ENCODE measurements at regions of chr21 and their contacts with region 1.

Region 1: DNA sequence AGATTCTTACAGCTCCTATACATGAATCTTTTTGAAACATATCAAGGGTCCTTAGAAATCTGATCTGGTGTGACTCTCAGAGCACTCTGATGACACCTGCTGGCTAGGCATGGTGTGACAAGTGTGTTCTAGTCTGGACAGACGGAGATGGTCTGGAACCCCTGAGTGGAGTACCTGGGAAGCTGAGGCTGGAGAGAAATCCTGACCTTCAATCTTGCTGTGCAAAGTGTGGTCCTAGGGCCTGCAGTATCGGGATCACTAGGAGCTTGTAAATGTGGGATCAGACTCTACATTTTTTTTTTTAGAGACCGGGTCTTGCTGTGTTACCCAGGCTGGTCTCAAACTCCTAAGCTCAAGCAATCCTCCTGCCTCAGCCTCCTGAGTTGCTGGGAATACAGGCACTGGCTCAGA is 78.6 kb upstream of the SOD1 start:
- DNase-seq: peak; percentile 77
- H3K4me3 Mint-ChIP-seq: no peak overlapping the region
- H3K27ac Mint-ChIP-seq: no peak overlapping the region
- H3K4me1 Mint-ChIP-seq: peaks cover 3% of the 10 kb centered on the region
- H3K27me3 Mint-ChIP-seq: peaks cover 17% of the 10 kb centered on the region

Region 2: DNA sequence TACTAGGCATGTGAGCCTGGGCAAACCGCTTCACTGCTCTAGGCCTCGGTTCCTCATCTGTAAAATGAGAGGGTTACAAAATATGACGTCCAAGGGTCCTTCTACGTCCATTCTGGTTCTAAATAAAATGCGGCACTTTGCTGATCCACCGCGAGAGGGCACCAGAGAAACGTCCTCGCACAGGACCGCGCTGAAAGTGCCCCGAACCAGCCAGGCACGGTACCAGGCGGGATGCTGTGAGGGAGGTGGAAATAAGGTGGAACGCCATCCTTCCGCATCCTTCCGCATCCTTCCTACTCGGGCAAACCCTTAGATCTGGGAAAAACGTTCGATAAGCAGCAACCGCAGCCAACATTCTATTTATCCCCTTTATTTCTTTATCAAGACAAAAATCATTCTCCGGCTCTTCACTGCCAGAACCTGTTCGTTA is 482.3 kb before region 1 on chr21:
- CTCF ChIA-PET with region 1: interaction called, 17 read pairs
- POLR2A ChIA-PET with region 1: no interaction called
- DNase-seq: peak; percentile 75
- H3K4me3 Mint-ChIP-seq: no peak overlapping the region
- H3K27ac Mint-ChIP-seq: no peak overlapping the region
- H3K4me1 Mint-ChIP-seq: peaks cover 26% of the 10 kb centered on the region
- H3K27me3 Mint-ChIP-seq: peaks cover 13% of the 10 kb centered on the region

Region 3: DNA sequence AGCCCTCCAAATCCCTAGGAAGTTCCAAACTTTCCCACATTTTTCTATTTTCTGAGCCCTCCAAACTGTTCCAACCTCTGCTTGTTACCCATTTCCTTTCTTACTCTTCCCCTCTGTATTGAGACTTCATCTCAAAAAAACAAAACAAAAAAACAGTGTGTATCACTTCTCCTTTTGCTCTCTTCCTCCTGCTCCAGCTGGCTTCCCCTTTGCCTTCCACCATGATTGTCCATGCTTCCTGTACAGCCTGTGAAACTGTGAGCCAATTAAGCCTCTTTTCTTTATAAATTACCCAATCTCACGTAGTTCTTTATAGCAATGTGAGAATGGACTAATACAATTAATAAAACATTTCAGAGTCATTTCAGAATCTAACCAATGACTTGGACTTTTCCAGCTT is 473.0 kb before region 1 on chr21:
- CTCF ChIA-PET with region 1: interaction called, 12 read pairs
- POLR2A ChIA-PET with region 1: interaction called, 3 read pairs
- DNase-seq: no peak
- H3K4me3 Mint-ChIP-seq: no peak overlapping the region
- H3K27ac Mint-ChIP-seq: no peak overlapping the region
- H3K4me1 Mint-ChIP-seq: peaks cover 22% of the 10 kb centered on the region
- H3K27me3 Mint-ChIP-seq: no peaks in the 10 kb centered on the region

Region 4: GRCh38 chr21:31198575-31198974 is 382.3 kb before region 1 on chr21:
- CTCF ChIA-PET with region 1: interaction called, 100 read pairs
- POLR2A ChIA-PET with region 1: interaction called, 5 read pairs
- DNase-seq: no peak
- H3K4me3 Mint-ChIP-seq: no peak overlapping the region
- H3K27ac Mint-ChIP-seq: no peak overlapping the region
- H3K4me1 Mint-ChIP-seq: peaks cover 39% of the 10 kb centered on the region
- H3K27me3 Mint-ChIP-seq: no peaks in the 10 kb centered on the region

Region 5: DNA sequence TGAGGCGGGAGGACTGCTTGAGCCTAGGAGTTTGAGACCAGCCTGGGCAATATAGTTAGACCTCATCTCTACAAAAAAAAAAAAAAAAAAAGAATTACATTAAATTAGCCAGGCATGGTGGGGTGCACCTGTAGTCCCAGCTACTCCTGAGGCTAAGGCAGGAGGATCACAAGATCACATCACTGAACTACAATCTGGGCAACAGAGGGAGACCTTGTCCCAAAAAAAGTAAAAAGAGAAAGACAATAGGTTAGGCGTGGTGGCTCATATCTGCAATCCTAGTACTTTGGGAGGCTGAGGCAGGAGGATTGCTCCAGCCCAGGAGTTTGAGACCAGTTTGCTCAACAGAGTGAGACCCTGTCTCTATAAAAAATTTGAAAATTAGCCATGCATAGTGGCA is 367.1 kb before region 1 on chr21:
- CTCF ChIA-PET with region 1: interaction called, 21 read pairs
- POLR2A ChIA-PET with region 1: no interaction called
- DNase-seq: no peak
- H3K4me3 Mint-ChIP-seq: no peak overlapping the region
- H3K27ac Mint-ChIP-seq: no peak overlapping the region
- H3K4me1 Mint-ChIP-seq: no peaks in the 10 kb centered on the region
- H3K27me3 Mint-ChIP-seq: no peaks in the 10 kb centered on the region

Region 6: GRCh38 chr21:31371715-31372470 is 209.0 kb before region 1 on chr21:
- CTCF ChIA-PET with region 1: no interaction called
- POLR2A ChIA-PET with region 1: no interaction called
- DNase-seq: no peak
- H3K4me3 Mint-ChIP-seq: no peak overlapping the region
- H3K27ac Mint-ChIP-seq: no peak overlapping the region
- H3K4me1 Mint-ChIP-seq: peaks cover 4% of the 10 kb centered on the region
- H3K27me3 Mint-ChIP-seq: peaks cover 7% of the 10 kb centered on the region

Region 7: DNA sequence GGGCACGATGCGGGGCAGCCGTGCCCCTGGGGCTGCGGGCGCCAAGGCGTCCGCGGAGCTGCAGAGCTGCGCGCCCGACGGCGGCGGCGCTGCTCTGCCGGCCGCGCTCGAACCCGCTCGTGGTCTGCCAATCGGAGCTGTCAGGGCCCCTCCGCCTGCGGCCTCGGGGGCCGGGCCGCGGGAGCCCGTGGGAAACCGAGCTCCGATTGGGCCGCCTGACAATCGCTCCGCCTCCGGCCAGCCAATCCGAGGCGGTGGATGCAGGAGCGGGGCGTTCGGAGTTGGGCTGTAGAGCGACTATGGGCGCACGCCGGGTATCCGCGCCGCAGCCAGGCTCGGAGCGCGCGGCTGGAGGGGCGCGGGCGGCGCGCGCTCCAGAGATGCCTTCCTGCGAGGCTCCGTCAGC is 21.9 kb before region 1 on chr21:
- CTCF ChIA-PET with region 1: interaction called, 25 read pairs
- POLR2A ChIA-PET with region 1: interaction called, 5 read pairs
- DNase-seq: peak; percentile 93
- H3K4me3 Mint-ChIP-seq: peak overlapping the region; percentile 86
- H3K27ac Mint-ChIP-seq: no peak overlapping the region
- H3K4me1 Mint-ChIP-seq: peaks cover 45% of the 10 kb centered on the region
- H3K27me3 Mint-ChIP-seq: peaks cover 34% of the 10 kb centered on the region

Region 8: DNA sequence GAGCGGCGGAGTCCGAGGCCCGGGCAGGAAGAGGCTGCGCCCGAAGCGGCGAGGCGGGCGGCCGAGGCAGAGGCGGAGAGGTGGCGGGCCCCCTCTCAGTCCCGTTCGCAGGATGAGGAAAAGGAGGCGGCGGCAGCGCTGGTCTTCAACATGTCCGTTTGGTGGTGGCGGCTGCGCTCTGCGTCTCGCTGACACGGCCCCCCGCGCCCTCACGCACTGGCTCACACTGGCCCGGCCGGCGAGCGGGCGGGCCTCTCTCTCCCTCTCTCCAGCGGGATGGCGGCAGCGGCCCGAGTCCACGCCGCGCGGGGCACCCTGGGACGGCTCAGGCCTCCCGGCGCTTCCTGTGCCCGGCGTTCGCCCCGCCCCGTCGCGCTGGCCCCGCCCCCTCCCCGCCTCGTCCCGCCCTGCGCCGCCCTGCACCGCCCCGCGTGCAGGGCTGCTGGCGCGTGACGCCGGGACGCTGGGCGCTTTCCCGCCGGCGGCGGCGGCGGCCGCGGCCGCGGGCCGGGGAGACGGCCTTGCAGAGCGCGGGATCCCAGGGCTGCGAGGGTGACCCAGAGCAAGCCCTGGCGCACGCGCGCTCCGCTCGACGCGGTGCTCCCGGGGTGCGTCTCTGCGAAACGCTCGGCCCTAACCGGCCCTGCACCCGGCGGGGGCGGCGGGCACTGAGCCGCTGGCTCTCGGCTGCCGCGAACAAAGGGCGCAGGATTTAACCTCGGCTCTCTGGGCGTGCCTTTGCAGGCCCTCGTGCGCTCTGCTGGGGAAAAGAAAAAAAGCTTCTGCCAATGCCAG is 151.1 kb after region 1 on chr21 and contains the start of gene SCAF4:
- CTCF ChIA-PET with region 1: no interaction called
- POLR2A ChIA-PET with region 1: no interaction called
- DNase-seq: peak; percentile 85
- H3K4me3 Mint-ChIP-seq: peak within 1 kb of the TSS; percentile 83
- H3K27ac Mint-ChIP-seq: peak within 1 kb of the TSS; percentile 74
- H3K4me1 Mint-ChIP-seq: peaks cover 4% of the 10 kb centered on the region
- H3K27me3 Mint-ChIP-seq: peaks cover 4% of the 10 kb centered on the region
- total RNA-seq, gene SCAF4: 49.0 to 49.3 TPM

Region 9: GRCh38 chr21:31772674-31773555 is 192.0 kb after region 1 on chr21:
- CTCF ChIA-PET with region 1: no interaction called
- POLR2A ChIA-PET with region 1: no interaction called
- DNase-seq: no peak
- H3K4me3 Mint-ChIP-seq: no peak overlapping the region
- H3K27ac Mint-ChIP-seq: no peak overlapping the region
- H3K4me1 Mint-ChIP-seq: no peaks in the 10 kb centered on the region
- H3K27me3 Mint-ChIP-seq: peaks cover 2% of the 10 kb centered on the region

Measured in activated CD4-positive, alpha-beta memory T cell treated with anti-CD3 and anti-CD28 coated beads, Interleukin-2, amount 10 ng/mL, durations not matched to agents 7 days and 5 days (primary cell).